HepG2 (cell line): ENCODE measurements at regions of chr7 and their contacts with region 1.

Region 1: GRCh38 chr7:99558306-99559174 is at the start of gene ZNF655:
- DNase-seq: peak; percentile 90
- ATAC-seq: peak; percentile 96
- H3K4me3 ChIP-seq: peak within 1 kb of the TSS; percentile 87 to 99 (median 98)
- H3K27ac ChIP-seq: peak within 1 kb of the TSS; percentile 95
- H3K4me1 ChIP-seq: peaks cover 43% of the 10 kb centered on the region
- H3K27me3 ChIP-seq: no peaks in the 10 kb centered on the region; a peak in 1 of 5 replicates
- CTCF ChIP-seq: no peak
- EP300 ChIP-seq: no peak
- POLR2A ChIP-seq: peak; percentile 67 to 94
- RAD21 ChIP-seq: peak; percentile 28; the same call in 1 of the 2 replicates
- total RNA-seq, gene ZNF655: 53.4 and 54.8 TPM in 2 replicates

Region 2: GRCh38 chr7:98378210-98378819 is 1180.2 kb before region 1 on chr7:
- CTCF ChIA-PET with region 1: no interaction called
- POLR2A ChIA-PET with region 1: no interaction called
- in situ Hi-C with region 1: no loop called
- intact Hi-C with region 1: no loop called
- DNase-seq: no peak
- ATAC-seq: no peak
- H3K4me3 ChIP-seq: no peak overlapping the region
- H3K27ac ChIP-seq: no peak overlapping the region
- H3K4me1 ChIP-seq: peaks cover 13% of the 10 kb centered on the region
- H3K27me3 ChIP-seq: no peaks in the 10 kb centered on the region
- CTCF ChIP-seq: no peak
- EP300 ChIP-seq: no peak
- POLR2A ChIP-seq: no peak
- RAD21 ChIP-seq: no peak

Region 3: DNA sequence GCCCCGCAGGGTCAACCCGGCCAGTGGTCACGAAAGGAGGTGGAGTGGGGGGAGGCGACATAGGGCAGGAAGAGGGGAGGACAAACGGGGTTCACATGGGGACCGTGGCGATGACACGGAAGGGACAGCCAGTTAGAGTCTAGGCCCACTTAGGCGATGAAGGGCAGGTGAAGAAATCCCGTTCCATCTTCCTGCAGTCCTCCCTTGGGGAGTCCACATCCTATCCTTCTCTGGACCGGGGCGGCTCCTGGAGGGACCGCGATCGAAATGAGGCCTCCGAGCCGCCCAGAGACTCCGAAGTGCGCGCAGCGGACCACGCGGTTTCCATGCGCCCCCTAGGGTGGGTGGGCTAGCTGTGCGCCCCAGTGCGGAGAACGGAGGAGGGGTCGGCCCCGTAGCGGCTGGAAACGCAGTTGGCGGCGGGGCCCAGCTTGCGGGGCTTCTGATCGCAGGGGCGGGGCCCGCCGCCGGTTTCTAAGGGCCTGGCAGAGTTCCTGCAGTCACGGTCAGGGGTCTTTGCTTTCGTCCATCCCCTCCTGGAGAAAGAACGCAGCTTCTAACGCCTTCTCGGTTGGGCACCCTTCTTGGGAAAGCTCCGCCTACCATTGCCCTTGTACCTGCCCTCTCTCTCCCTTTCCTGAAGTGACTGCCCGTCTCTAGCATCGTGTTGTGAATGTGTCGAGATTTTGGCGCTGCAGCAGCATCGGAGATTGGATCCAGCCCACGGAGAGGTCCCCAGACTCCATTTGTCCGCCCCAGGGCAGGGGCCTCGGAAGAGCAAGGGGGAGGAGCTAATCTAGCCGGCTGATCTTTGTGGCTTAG is 21.6 kb after region 1 on chr7:
- CTCF ChIA-PET with region 1: no interaction called
- POLR2A ChIA-PET with region 1: interaction called, 17 read pairs
- in situ Hi-C with region 1: no loop called
- intact Hi-C with region 1: no loop called
- DNase-seq: peak; percentile 6
- ATAC-seq: peak; percentile 84
- H3K4me3 ChIP-seq: peak overlapping the region; percentile 48 to 64 (median 52); a peak in 5 of 6 replicates
- H3K27ac ChIP-seq: no peak overlapping the region
- H3K4me1 ChIP-seq: peaks cover 5% of the 10 kb centered on the region; the same call in 1 of the 2 replicates
- H3K27me3 ChIP-seq: no peaks in the 10 kb centered on the region
- CTCF ChIP-seq: peak; percentile 76
- EP300 ChIP-seq: no peak
- POLR2A ChIP-seq: no peak
- RAD21 ChIP-seq: peak; percentile 21; the same call in 1 of the 2 replicates

Region 4: DNA sequence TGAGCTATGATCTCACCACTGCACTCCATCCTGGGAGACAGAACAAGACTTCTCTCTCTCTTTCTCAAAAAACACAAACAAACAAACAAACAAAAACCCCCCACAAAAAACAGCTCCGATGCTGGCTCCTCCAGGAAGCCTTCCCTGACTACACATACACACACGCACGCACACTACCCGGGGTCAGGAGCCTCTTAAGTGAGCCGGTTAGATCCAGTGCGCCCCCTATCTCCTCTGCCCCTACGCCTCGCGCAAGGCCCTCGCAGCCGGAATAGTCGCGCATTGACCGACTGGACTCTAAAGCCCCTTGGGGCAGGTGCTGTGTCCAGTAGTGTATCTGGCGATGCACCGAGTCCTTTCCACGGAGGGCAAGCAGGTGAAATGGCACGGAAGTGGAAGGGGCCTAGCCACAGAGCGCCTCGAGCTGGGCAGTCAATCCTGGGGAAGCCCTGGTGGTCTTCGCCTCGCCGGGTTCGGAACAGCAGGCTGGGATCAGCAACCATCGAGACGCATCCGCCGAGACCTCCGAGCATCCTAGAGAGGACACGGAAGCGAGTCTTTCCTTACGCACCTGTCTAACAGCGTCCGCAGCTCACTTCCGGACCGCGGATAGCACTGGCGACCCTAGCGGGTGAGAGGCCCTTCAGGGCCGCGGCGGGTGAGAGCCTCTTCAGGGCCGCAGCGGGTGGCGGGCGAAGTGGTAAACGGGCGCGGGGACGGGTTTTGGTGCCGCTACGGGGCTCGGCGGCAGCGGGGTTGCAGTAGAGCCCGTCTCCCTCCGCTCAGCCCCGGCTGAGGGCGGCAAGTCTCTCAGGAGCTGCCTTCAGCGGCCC is 58.0 kb after region 1 on chr7 and contains the start of gene ZSCAN25:
- CTCF ChIA-PET with region 1: no interaction called
- POLR2A ChIA-PET with region 1: interaction called, 18 read pairs
- in situ Hi-C with region 1: no loop called
- intact Hi-C with region 1: loop called (anchors 2 kb)
- DNase-seq: peak; percentile 91
- ATAC-seq: peak; percentile 96
- H3K4me3 ChIP-seq: peak within 1 kb of the TSS; percentile 93 to 98 (median 96)
- H3K27ac ChIP-seq: peak within 1 kb of the TSS; percentile 96
- H3K4me1 ChIP-seq: peaks cover 25% of the 10 kb centered on the region
- H3K27me3 ChIP-seq: no peaks in the 10 kb centered on the region; a peak in 1 of 5 replicates
- CTCF ChIP-seq: peak; percentile 97
- EP300 ChIP-seq: no peak
- POLR2A ChIP-seq: peak; percentile 82 to 83
- RAD21 ChIP-seq: peak; percentile 71
- total RNA-seq, gene ZSCAN25: 16.3 and 16.8 TPM in 2 replicates